ENCODE measurements at regions of chr1 and their contacts with region 1.

Region 1: GRCh38 chr1:96966536-96967138 is 245.1 kb downstream of the PTBP2 start:
- DNase-seq: peak; percentile 58 to 86 (median 77)
- ATAC-seq: peak; percentile 77
- H3K4me3 ChIP-seq: no peak overlapping the region
- H3K27ac ChIP-seq: no peak overlapping the region
- H3K4me1 ChIP-seq: no peaks in the 10 kb centered on the region
- H3K27me3 ChIP-seq: no peaks in the 10 kb centered on the region

Region 2: DNA sequence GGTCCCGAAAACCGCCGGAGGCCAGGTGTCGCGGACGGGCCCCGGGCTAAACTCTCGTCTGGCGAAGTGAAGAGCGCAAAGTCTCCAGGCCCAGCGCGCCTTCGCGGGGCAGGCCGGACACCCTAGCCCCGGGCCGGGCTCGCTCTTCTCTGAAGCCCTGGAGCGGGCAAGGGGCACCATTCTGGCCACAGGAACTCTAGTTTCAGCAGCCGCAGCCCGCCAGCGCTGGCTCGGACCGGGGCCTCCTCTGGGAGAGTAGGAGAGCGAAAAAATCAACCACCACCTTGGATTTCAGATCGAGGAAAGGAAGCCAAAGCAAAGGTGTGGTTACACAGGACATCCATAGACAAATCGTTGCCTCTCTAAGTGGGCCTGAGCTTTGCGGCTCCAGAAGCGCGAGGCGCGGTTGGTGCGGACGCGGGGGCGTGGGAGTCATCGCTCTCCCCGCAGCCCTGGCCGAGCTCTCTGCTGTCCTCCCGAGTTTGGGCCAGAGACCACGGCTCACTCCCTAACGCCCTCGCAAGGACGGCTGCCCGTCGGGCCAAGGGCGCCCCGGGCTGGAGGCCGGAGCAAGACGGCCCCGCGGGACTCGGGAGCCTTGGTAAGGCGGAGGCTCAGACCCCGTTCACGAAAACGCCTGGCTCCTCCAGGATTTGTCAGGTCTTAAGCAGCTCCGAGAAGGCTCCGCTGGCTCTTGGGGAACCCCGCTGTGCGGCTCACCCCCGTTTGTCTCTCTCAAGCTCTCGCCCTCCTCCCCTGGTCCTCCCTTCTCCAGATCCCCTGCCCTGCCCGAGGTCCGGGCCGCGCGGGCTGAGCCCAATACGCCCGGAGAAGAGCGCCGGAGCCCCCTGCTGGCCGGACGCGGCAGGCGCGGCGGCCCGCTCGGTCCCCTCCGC is 1087.1 kb after region 1 on chr1:
- intact Hi-C with region 1: loop called in 2 of 4 experiments (anchors 5 to 10 kb)
- DNase-seq: peak; percentile 62 to 86 (median 83)
- ATAC-seq: peak; percentile 98 to 99
- H3K4me3 ChIP-seq: peak overlapping the region; percentile 41
- H3K27ac ChIP-seq: no peak overlapping the region
- H3K4me1 ChIP-seq: no peaks in the 10 kb centered on the region
- H3K27me3 ChIP-seq: no peaks in the 10 kb centered on the region

Measured in right cardiac atrium (tissue), 5 donors.